H1 (cell line): ENCODE measurements at regions of chr5 and their contacts with region 1.

Region 1: GRCh38 chr5:102654559-102655349 is 100.4 kb upstream of the PAM start:
- DNase-seq: no peak
- H3K4me3 ChIP-seq: no peak overlapping the region
- H3K27ac ChIP-seq: no peak overlapping the region
- H3K4me1 ChIP-seq: peaks cover 0 to 3% (median 1%) of the 10 kb centered on the region in 4 experiments; a peak in 1 of 7 replicates
- H3K27me3 ChIP-seq: no peaks in the 10 kb centered on the region
- CTCF ChIP-seq: no peak
- EP300 ChIP-seq: no peak
- POLR2A ChIP-seq: no peak
- RAD21 ChIP-seq: no peak

Region 2: GRCh38 chr5:102579379-102579778 is 75.4 kb before region 1 on chr5:
- CTCF ChIA-PET with region 1: no interaction called
- POLR2A ChIA-PET with region 1: no interaction called
- DNase-seq: no peak
- H3K4me3 ChIP-seq: no peak overlapping the region
- H3K27ac ChIP-seq: no peak overlapping the region
- H3K4me1 ChIP-seq: no peaks in the 10 kb centered on the region
- H3K27me3 ChIP-seq: no peaks in the 10 kb centered on the region
- CTCF ChIP-seq: no peak
- EP300 ChIP-seq: no peak
- POLR2A ChIP-seq: no peak
- RAD21 ChIP-seq: no peak

Region 3: GRCh38 chr5:102670224-102670836 is 15.6 kb after region 1 on chr5:
- CTCF ChIA-PET with region 1: interaction called, 12 read pairs
- POLR2A ChIA-PET with region 1: no interaction called
- DNase-seq: peak; percentile 1 to 75
- H3K4me3 ChIP-seq: peak overlapping the region in 2 of 4 experiments; percentile 42 to 45; a peak in 4 of 8 replicates
- H3K27ac ChIP-seq: no peak overlapping the region
- H3K4me1 ChIP-seq: peaks cover 0 to 6% (median 0%) of the 10 kb centered on the region in 4 experiments; a peak in 3 of 7 replicates
- H3K27me3 ChIP-seq: no peaks in the 10 kb centered on the region
- CTCF ChIP-seq: peak; percentile 62 to 83 (median 81)
- EP300 ChIP-seq: no peak
- POLR2A ChIP-seq: no peak
- RAD21 ChIP-seq: peak; percentile 48 to 57